ENCODE measurements at regions of chr7 and their contacts with region 1.

Region 1: GRCh38 chr7:992709-993607 is 10.0 kb downstream of the CYP2W1 start:
- DNase-seq: peak; percentile 91
- CTCF ChIP-seq: peak; percentile 100

Region 2: GRCh38 chr7:974820-975681 is 17.9 kb before region 1 on chr7 and contains the start of gene COX19:
- CTCF ChIA-PET with region 1: interaction called, 50 read pairs
- POLR2A ChIA-PET with region 1: no interaction called
- DNase-seq: peak; percentile 94
- CTCF ChIP-seq: no peak

Region 3: GRCh38 chr7:1044191-1045068 is 51.5 kb after region 1 on chr7 and contains the start of gene GPR146:
- CTCF ChIA-PET with region 1: interaction called, 391 read pairs
- POLR2A ChIA-PET with region 1: no interaction called
- DNase-seq: peak; percentile 100
- CTCF ChIP-seq: peak; percentile 61

Region 4: GRCh38 chr7:1103009-1103788 is 110.2 kb after region 1 on chr7:
- CTCF ChIA-PET with region 1: interaction called, 12 read pairs
- POLR2A ChIA-PET with region 1: no interaction called
- DNase-seq: peak; percentile 74
- CTCF ChIP-seq: no peak

Region 5: GRCh38 chr7:1156782-1157535 is 164.0 kb after region 1 on chr7:
- CTCF ChIA-PET with region 1: interaction called, 11 read pairs
- POLR2A ChIA-PET with region 1: no interaction called
- DNase-seq: no peak
- CTCF ChIP-seq: no peak